Naive thymus-derived CD4-positive, alpha-beta T cell (primary cell): ENCODE measurements at regions of chr1 and their contacts with region 1.

Region 1: GRCh38 chr1:25022361-25023189 is 92.5 kb upstream of the RUNX3 start:
- DNase-seq: peak; percentile 80 to 97 (median 91)
- ATAC-seq: peak; percentile 92
- H3K4me3 ChIP-seq: peak overlapping the region; percentile 49
- H3K4me3 Mint-ChIP-seq: peak overlapping the region; percentile 10 to 83 (median 76)
- H3K27ac ChIP-seq: peak overlapping the region; percentile 89
- H3K27ac Mint-ChIP-seq: peak overlapping the region; percentile 91 to 98 (median 96)
- H3K4me1 ChIP-seq: peaks cover 57 to 58% of the 10 kb centered on the region in 2 donors
- H3K4me1 Mint-ChIP-seq: peaks cover 45 to 89% (median 67%) of the 10 kb centered on the region in 7 donors
- H3K27me3 ChIP-seq: no peaks in the 10 kb centered on the region
- H3K27me3 Mint-ChIP-seq: no peaks in the 10 kb centered on the region

Region 2: DNA sequence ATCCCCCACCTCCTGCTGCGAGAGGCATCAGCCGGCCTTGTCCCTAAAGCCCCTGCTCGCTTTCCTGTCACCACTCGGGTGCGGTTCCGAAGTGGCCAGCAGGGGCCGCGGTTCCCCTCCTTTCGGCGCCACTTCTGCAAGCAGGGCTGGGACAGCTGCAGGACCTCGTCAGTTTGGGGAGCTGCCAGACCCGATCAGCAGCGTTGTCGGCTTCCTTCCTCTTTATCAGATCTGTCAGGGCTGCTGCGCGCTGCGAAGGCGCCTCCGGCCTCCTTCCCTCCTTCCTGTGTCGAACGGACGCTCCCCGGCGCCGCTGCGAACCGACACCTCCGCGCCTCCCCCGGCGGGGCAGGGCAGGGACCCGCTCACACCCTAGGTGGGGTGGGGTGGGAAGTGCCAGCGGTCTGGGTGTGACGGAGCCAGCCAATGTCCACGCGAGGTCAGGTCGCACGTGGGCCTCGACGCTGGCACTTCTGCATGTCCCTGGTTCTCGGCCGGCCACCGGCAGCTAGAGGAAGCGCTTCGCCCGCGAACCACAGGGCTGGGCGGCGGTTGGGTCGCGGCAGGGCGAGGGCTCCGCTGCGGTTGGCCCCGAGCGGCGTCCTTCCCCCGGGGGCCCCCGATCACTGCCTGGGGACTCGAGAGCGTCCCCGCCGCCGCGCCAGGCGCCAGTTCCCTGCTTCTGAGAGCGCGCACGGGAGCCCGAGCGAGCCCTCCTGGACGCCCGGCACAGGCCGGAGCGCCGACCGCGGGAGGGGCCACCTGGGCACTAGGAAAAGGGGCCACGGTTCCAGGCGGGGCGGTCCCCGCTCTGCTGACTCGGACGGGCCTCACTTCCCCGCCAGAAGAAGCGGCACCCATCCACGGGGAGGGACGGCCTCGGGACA is 174.3 kb before region 1 on chr1:
- CTCF ChIA-PET with region 1: interaction called, 4 read pairs
- POLR2A ChIA-PET with region 1: no interaction called
- intact Hi-C with region 1: loop called in 1 of 2 experiments (anchors 1 kb)
- DNase-seq: peak; percentile 77 to 91 (median 85)
- ATAC-seq: peak; percentile 94
- H3K4me3 ChIP-seq: peak overlapping the region; percentile 64
- H3K4me3 Mint-ChIP-seq: peak overlapping the region; percentile 72 to 84 (median 79)
- H3K27ac ChIP-seq: peak overlapping the region; percentile 47
- H3K27ac Mint-ChIP-seq: peak overlapping the region; percentile 9 to 80 (median 62)
- H3K4me1 ChIP-seq: peaks cover 7 to 14% of the 10 kb centered on the region in 2 donors
- H3K4me1 Mint-ChIP-seq: peaks cover 0 to 21% (median 11%) of the 10 kb centered on the region in 7 donors
- H3K27me3 ChIP-seq: no peaks in the 10 kb centered on the region
- H3K27me3 Mint-ChIP-seq: peaks cover 0 to 40% (median 0%) of the 10 kb centered on the region in 5 donors

Region 3: GRCh38 chr1:24955161-24955560 is 67.4 kb before region 1 on chr1:
- CTCF ChIA-PET with region 1: interaction called, 4 read pairs
- POLR2A ChIA-PET with region 1: interaction called, 3 read pairs
- intact Hi-C with region 1: loop called in 1 of 2 experiments (anchors 1 kb)
- DNase-seq: peak in 1 of 9 donors; percentile 75
- ATAC-seq: peak; percentile 88
- H3K4me3 ChIP-seq: no peak overlapping the region
- H3K4me3 Mint-ChIP-seq: peak overlapping the region; percentile 32 to 87 (median 66)
- H3K27ac ChIP-seq: no peak overlapping the region
- H3K27ac Mint-ChIP-seq: peak overlapping the region; percentile 56 to 92 (median 83)
- H3K4me1 ChIP-seq: peaks cover 56 to 57% of the 10 kb centered on the region in 2 donors
- H3K4me1 Mint-ChIP-seq: peaks cover 45 to 90% (median 80%) of the 10 kb centered on the region in 7 donors
- H3K27me3 ChIP-seq: no peaks in the 10 kb centered on the region
- H3K27me3 Mint-ChIP-seq: no peaks in the 10 kb centered on the region

Region 4: DNA sequence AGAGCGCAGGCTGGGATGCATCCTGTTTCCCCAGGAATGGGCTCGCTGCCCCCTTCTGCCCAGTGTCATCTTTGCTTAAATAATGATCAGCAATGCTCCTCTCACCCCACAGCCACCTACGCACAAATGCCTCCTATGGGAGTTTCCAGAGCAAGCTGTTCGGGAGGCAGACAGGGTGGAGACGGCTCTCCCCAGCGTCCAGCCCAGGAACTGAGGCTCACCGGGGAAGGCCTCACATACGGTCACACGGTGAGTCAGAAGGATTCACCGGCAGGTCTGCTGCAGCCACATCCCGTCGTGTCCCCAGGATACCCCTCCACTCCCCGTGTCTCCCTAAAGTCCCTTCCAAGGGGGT is 52.2 kb before region 1 on chr1:
- CTCF ChIA-PET with region 1: interaction called, 11 read pairs
- POLR2A ChIA-PET with region 1: interaction called, 33 read pairs
- intact Hi-C with region 1: loop called (anchors 1 kb)
- DNase-seq: no peak
- ATAC-seq: no peak
- H3K4me3 ChIP-seq: no peak overlapping the region
- H3K4me3 Mint-ChIP-seq: peak overlapping the region in 9 of 10 donors; percentile 5 to 78 (median 59)
- H3K27ac ChIP-seq: peak overlapping the region; percentile 35
- H3K27ac Mint-ChIP-seq: peak overlapping the region; percentile 14 to 97 (median 85)
- H3K4me1 ChIP-seq: peaks cover 23 to 47% of the 10 kb centered on the region in 2 donors
- H3K4me1 Mint-ChIP-seq: peaks cover 31 to 81% (median 66%) of the 10 kb centered on the region in 7 donors
- H3K27me3 ChIP-seq: no peaks in the 10 kb centered on the region
- H3K27me3 Mint-ChIP-seq: no peaks in the 10 kb centered on the region

Region 5: GRCh38 chr1:24996983-24997893 is 25.3 kb before region 1 on chr1:
- CTCF ChIA-PET with region 1: interaction called, 7 read pairs
- POLR2A ChIA-PET with region 1: interaction called, 67 read pairs
- intact Hi-C with region 1: loop called (anchors 1 kb)
- DNase-seq: no peak
- ATAC-seq: peak; percentile 52
- H3K4me3 ChIP-seq: peak overlapping the region; percentile 0
- H3K4me3 Mint-ChIP-seq: peak overlapping the region; percentile 10 to 95 (median 55)
- H3K27ac ChIP-seq: peak overlapping the region; percentile 29
- H3K27ac Mint-ChIP-seq: peak overlapping the region; percentile 67 to 100 (median 86)
- H3K4me1 ChIP-seq: peaks cover 56 to 69% of the 10 kb centered on the region in 2 donors
- H3K4me1 Mint-ChIP-seq: peaks cover 44 to 84% (median 76%) of the 10 kb centered on the region in 7 donors
- H3K27me3 ChIP-seq: no peaks in the 10 kb centered on the region
- H3K27me3 Mint-ChIP-seq: no peaks in the 10 kb centered on the region

Region 6: GRCh38 chr1:25037174-25038074 is 14.8 kb after region 1 on chr1:
- CTCF ChIA-PET with region 1: interaction called, 20 read pairs
- POLR2A ChIA-PET with region 1: interaction called, 68 read pairs
- intact Hi-C with region 1: loop called (anchors 1 kb)
- DNase-seq: peak; percentile 39 to 70 (median 56)
- ATAC-seq: peak; percentile 58
- H3K4me3 ChIP-seq: no peak overlapping the region
- H3K4me3 Mint-ChIP-seq: peak overlapping the region in 9 of 10 donors; percentile 1 to 44 (median 17)
- H3K27ac ChIP-seq: no peak overlapping the region
- H3K27ac Mint-ChIP-seq: peak overlapping the region in 8 of 9 donors; percentile 34 to 74 (median 54)
- H3K4me1 ChIP-seq: peaks cover 43 to 57% of the 10 kb centered on the region in 2 donors
- H3K4me1 Mint-ChIP-seq: peaks cover 28 to 42% (median 33%) of the 10 kb centered on the region in 7 donors
- H3K27me3 ChIP-seq: no peaks in the 10 kb centered on the region
- H3K27me3 Mint-ChIP-seq: peaks cover 0 to 12% (median 0%) of the 10 kb centered on the region in 5 donors